Body of pancreas (tissue), 4 donors: ENCODE measurements at regions of chr21 and their contacts with region 1.

Region 1: GRCh38 chr21:36927719-36928117 is 38.8 kb downstream of the HLCS start:
- DNase-seq: peak; percentile 80 to 88 (median 84)
- ATAC-seq: peak; percentile 82
- H3K4me3 ChIP-seq: no peak overlapping the region
- H3K27ac ChIP-seq: no peak overlapping the region
- H3K4me1 ChIP-seq: peaks cover 27% of the 10 kb centered on the region
- H3K27me3 ChIP-seq: no peaks in the 10 kb centered on the region
- CTCF ChIP-seq: peak; percentile 69 to 92 (median 82)
- POLR2A ChIP-seq: no peak

Region 2: GRCh38 chr21:36630485-36631206 is 297.1 kb before region 1 on chr21:
- intact Hi-C with region 1: loop called (anchors 5 kb)
- DNase-seq: peak; percentile 55 to 74 (median 68)
- ATAC-seq: peak; percentile 66
- H3K4me3 ChIP-seq: no peak overlapping the region
- H3K27ac ChIP-seq: no peak overlapping the region
- H3K4me1 ChIP-seq: no peaks in the 10 kb centered on the region
- H3K27me3 ChIP-seq: no peaks in the 10 kb centered on the region
- CTCF ChIP-seq: peak; percentile 39 to 76 (median 60)
- POLR2A ChIP-seq: no peak

Region 3: GRCh38 chr21:36749935-36750578 is 177.7 kb before region 1 on chr21:
- intact Hi-C with region 1: loop called (anchors 10 kb)
- DNase-seq: no peak
- ATAC-seq: no peak
- H3K4me3 ChIP-seq: no peak overlapping the region
- H3K27ac ChIP-seq: no peak overlapping the region
- H3K4me1 ChIP-seq: peaks cover 10% of the 10 kb centered on the region
- H3K27me3 ChIP-seq: no peaks in the 10 kb centered on the region
- CTCF ChIP-seq: no peak
- POLR2A ChIP-seq: no peak